ENCODE measurements at regions of chr7 and their contacts with region 1.

Region 1: DNA sequence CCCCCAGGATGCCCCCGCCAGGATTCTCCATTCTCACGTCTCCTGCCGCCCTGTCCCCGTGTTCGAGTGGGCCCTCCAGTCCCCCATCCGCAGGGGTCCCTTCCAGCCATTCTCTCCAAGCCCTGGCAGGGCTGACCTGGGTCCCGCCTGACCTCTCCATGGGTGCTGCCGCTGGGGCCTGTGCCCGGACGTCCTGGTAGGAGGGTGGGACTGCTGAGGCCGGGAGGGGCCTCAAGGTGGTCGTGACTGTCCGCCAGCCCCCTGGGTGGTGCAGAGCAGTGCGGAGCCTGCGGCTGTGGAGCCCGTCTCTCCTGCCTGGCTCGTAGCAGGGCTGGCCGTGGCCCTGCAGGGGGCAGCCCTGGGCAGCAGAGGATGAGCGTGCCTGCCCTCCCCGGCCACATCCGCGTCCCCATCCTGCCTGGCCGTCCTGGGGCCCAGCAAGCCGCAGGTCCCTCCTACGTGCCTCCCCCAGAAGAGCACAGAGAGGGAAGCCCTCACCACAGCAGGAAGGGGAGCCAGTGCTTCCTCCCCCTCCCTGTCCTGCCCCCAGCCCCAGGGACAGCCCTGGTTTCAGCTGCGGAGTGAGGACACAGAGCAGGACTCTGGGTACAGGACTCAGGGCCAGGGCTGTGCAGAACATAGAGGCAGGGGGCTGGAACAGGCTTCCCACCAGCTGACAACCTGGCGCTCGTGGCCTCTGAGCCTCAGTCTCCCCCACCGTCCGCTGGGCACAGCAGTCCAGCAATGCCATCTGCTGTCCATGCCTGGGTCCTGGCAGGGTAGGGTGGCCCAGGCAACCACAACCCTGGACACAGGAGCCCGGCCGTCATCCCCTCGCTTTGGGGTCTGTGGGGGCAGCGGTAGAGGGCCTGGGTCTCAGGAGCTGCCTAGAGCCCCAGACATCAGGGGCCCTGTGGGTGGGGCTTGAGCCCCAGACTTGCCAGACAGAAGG is 1.5 kb upstream of the GRIFIN start:
- DNase-seq: peak; percentile 53
- H3K4me3 ChIP-seq: no peak overlapping the region
- H3K27ac ChIP-seq: no peak overlapping the region
- H3K4me1 ChIP-seq: no peaks in the 10 kb centered on the region
- H3K27me3 ChIP-seq: peaks cover 0 to 4% of the 10 kb centered on the region in 2 experiments
- CTCF ChIP-seq: peak; percentile 81 to 95
- POLR2A ChIP-seq: no peak

Region 2: GRCh38 chr7:2405601-2406345 is 72.0 kb before region 1 on chr7:
- CTCF ChIA-PET with region 1: no interaction called
- POLR2A ChIA-PET with region 1: no interaction called
- dilution Hi-C with region 1: no loop called
- intact Hi-C with region 1: no loop called
- DNase-seq: no peak
- H3K4me3 ChIP-seq: no peak overlapping the region
- H3K27ac ChIP-seq: no peak overlapping the region
- H3K4me1 ChIP-seq: peaks cover 32% of the 10 kb centered on the region
- H3K27me3 ChIP-seq: no peaks in the 10 kb centered on the region
- CTCF ChIP-seq: no peak
- POLR2A ChIP-seq: no peak

Region 3: GRCh38 chr7:2660585-2661408 is 183.1 kb after region 1 on chr7:
- CTCF ChIA-PET with region 1: no interaction called
- POLR2A ChIA-PET with region 1: no interaction called
- dilution Hi-C with region 1: no loop called
- intact Hi-C with region 1: loop called (anchors 5 kb)
- DNase-seq: no peak
- H3K4me3 ChIP-seq: no peak overlapping the region
- H3K27ac ChIP-seq: no peak overlapping the region
- H3K4me1 ChIP-seq: peaks cover 14% of the 10 kb centered on the region
- H3K27me3 ChIP-seq: no peaks in the 10 kb centered on the region
- CTCF ChIP-seq: peak; percentile 28 to 34
- POLR2A ChIP-seq: no peak

Measured in endothelial cell of umbilical vein (primary cell).